GM12878 (cell line): ENCODE measurements at regions of chr9 and their contacts with region 1.

Region 1: GRCh38 chr9:84748112-84748511 is 78.6 kb downstream of the NTRK2 start:
- DNase-seq: peak; percentile 66
- ATAC-seq: peak; percentile 73
- H3K4me3 ChIP-seq: no peak overlapping the region; the same call in 1 of the 2 replicates
- H3K27ac ChIP-seq: peak overlapping the region; percentile 73
- H3K4me1 ChIP-seq: peaks cover 42% of the 10 kb centered on the region
- H3K27me3 ChIP-seq: no peaks in the 10 kb centered on the region
- CTCF ChIP-seq: no peak
- EP300 ChIP-seq: peak; percentile 51 to 71; a peak in 2 of 4 replicates
- POLR2A ChIP-seq: no peak
- RAD21 ChIP-seq: no peak

Region 2: GRCh38 chr9:84703793-84704192 is 44.3 kb before region 1 on chr9:
- CTCF ChIA-PET with region 1: interaction called, 177 read pairs
- POLR2A ChIA-PET with region 1: interaction called, 18 read pairs
- RAD21 ChIA-PET with region 1: interaction called, 20 read pairs
- SMC1A ChIA-PET with region 1: interaction called, 165 read pairs
- in situ Hi-C with region 1: loop called (anchors 10 kb)
- intact Hi-C with region 1: loop called (anchors 2 kb)
- DNase-seq: no peak
- ATAC-seq: peak; percentile 11
- H3K4me3 ChIP-seq: no peak overlapping the region
- H3K27ac ChIP-seq: no peak overlapping the region
- H3K4me1 ChIP-seq: peaks cover 17% of the 10 kb centered on the region
- H3K27me3 ChIP-seq: no peaks in the 10 kb centered on the region
- CTCF ChIP-seq: no peak
- EP300 ChIP-seq: no peak
- POLR2A ChIP-seq: no peak
- RAD21 ChIP-seq: no peak

Region 3: DNA sequence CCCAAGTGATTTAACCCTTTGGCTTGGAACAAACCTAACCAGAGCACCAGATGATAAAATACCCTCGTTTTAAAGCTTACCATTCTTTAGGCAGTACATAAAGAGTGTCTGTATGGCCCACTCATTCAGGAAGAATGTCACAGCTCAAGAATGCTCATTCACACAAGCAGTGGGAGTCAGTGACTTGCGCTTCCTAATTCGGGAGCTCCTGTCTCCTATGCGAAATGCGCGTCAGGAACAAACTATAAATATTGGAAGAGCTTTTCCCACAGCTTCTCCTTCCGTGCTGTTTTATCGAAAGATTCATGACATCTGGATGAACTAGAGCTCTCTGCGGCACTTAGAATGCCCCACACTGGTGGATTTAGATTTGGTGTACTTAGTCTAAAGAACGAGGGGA is 12.0 kb before region 1 on chr9:
- CTCF ChIA-PET with region 1: interaction called, 10 read pairs
- POLR2A ChIA-PET with region 1: interaction called, 6 read pairs
- RAD21 ChIA-PET with region 1: interaction called, 3 read pairs
- SMC1A ChIA-PET with region 1: interaction called, 61 read pairs
- in situ Hi-C with region 1: no loop called
- intact Hi-C with region 1: no loop called
- DNase-seq: no peak
- ATAC-seq: no peak
- H3K4me3 ChIP-seq: no peak overlapping the region
- H3K27ac ChIP-seq: no peak overlapping the region
- H3K4me1 ChIP-seq: no peaks in the 10 kb centered on the region
- H3K27me3 ChIP-seq: no peaks in the 10 kb centered on the region
- CTCF ChIP-seq: no peak
- EP300 ChIP-seq: no peak
- POLR2A ChIP-seq: no peak
- RAD21 ChIP-seq: no peak

Region 4: GRCh38 chr9:84940294-84940693 is 192.2 kb after region 1 on chr9:
- CTCF ChIA-PET with region 1: no interaction called
- POLR2A ChIA-PET with region 1: no interaction called
- RAD21 ChIA-PET with region 1: no interaction called
- SMC1A ChIA-PET with region 1: no interaction called
- in situ Hi-C with region 1: no loop called
- intact Hi-C with region 1: no loop called
- DNase-seq: no peak
- ATAC-seq: no peak
- H3K4me3 ChIP-seq: no peak overlapping the region
- H3K27ac ChIP-seq: no peak overlapping the region
- H3K4me1 ChIP-seq: 0 out of 2 replicates have a peak, but pooled peaks cover 2% of the 10 kb centered on the region
- H3K27me3 ChIP-seq: no peaks in the 10 kb centered on the region; a peak in 1 of 4 replicates
- CTCF ChIP-seq: no peak
- EP300 ChIP-seq: no peak
- POLR2A ChIP-seq: no peak
- RAD21 ChIP-seq: no peak